T-cell (primary cell): ENCODE measurements at regions of chr4 and their contacts with region 1.

Region 1: DNA sequence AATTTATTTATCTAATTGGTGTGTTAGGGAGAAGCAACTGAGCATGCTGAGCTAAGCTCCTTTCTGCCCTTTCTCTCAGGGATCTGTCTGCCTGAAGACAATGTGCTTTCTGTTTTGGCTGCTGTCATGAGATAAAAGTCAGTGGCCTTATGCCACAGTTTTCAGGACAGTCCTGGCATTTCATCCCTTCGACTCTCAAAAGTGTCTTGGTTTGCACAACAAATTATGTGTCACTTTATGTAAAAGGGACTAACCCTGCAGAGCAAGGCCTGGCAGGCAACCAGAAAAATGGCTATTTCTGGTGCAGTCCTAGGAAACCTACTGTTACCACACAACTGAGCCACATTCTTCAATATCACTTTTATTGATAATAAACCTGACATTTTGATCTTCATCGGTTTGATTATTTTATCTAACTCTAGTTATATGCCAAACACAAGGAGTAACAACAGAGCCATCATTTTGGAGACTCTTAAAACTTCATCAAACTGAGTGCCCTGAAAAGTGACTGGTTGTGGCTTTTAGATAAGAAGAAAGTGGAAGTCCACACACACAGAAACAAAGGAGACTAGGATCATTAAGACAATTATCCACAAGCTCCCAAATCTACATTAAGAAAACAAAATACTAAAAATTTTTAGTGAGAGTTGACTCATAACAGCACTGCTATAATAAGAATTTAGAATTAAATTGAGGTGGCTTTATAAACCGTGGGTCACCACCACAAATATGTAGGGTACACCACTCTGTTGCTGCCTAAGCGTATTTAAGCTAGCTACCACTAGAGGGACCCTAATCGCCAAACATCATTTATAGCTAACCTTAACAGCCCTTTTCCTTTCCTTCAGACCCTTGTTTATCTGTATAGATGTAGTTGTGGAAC is 95.9 kb upstream of the PTPN13 start:
- DNase-seq: peak in 1 of 35 experiments; percentile 52
- ATAC-seq: peak; percentile 37 to 58 (median 50)
- H3K4me3 ChIP-seq: no peak overlapping the region
- H3K4me3 Mint-ChIP-seq: no peak overlapping the region
- H3K27ac ChIP-seq: no peak overlapping the region
- H3K27ac Mint-ChIP-seq: no peak overlapping the region
- H3K4me1 ChIP-seq: no peaks in the 10 kb centered on the region
- H3K4me1 Mint-ChIP-seq: no peaks in the 10 kb centered on the region
- H3K27me3 ChIP-seq: no peaks in the 10 kb centered on the region
- H3K27me3 Mint-ChIP-seq: peaks cover 8 to 12% of the 10 kb centered on the region in 2 donors

Region 2: GRCh38 chr4:86487738-86488348 is 10.4 kb before region 1 on chr4:
- CTCF ChIA-PET with region 1: interaction called, 8 to 17 read pairs
- POLR2A ChIA-PET with region 1: no interaction called
- DNase-seq: no peak
- ATAC-seq: no peak
- H3K4me3 ChIP-seq: no peak overlapping the region
- H3K4me3 Mint-ChIP-seq: no peak overlapping the region
- H3K27ac ChIP-seq: no peak overlapping the region
- H3K27ac Mint-ChIP-seq: no peak overlapping the region
- H3K4me1 ChIP-seq: no peaks in the 10 kb centered on the region
- H3K4me1 Mint-ChIP-seq: peaks cover 0 to 4% (median 3%) of the 10 kb centered on the region in 3 donors
- H3K27me3 ChIP-seq: no peaks in the 10 kb centered on the region
- H3K27me3 Mint-ChIP-seq: no peaks in the 10 kb centered on the region

Region 3: GRCh38 chr4:86895692-86896488 is 397.7 kb after region 1 on chr4:
- CTCF ChIA-PET with region 1: interaction called, 5 to 13 read pairs
- POLR2A ChIA-PET with region 1: no interaction called
- DNase-seq: peak in 4 of 35 experiments; percentile 4 to 66 (median 12)
- ATAC-seq: peak in 2 of 4 experiments; percentile 48 to 60
- H3K4me3 ChIP-seq: no peak overlapping the region
- H3K4me3 Mint-ChIP-seq: no peak overlapping the region
- H3K27ac ChIP-seq: no peak overlapping the region
- H3K27ac Mint-ChIP-seq: no peak overlapping the region
- H3K4me1 ChIP-seq: peaks cover 0 to 10% of the 10 kb centered on the region in 2 experiments
- H3K4me1 Mint-ChIP-seq: peaks cover 6 to 10% (median 7%) of the 10 kb centered on the region in 3 donors
- H3K27me3 ChIP-seq: peaks cover 0 to 18% of the 10 kb centered on the region in 2 experiments
- H3K27me3 Mint-ChIP-seq: peaks cover 15 to 17% of the 10 kb centered on the region in 2 donors

Region 4: GRCh38 chr4:86908251-86908657 is 410.0 kb after region 1 on chr4:
- CTCF ChIA-PET with region 1: interaction called, 4 to 11 read pairs
- POLR2A ChIA-PET with region 1: interaction called in 1 of 2 experiments, 3 read pairs
- DNase-seq: peak in 1 of 35 experiments; percentile 4
- ATAC-seq: no peak
- H3K4me3 ChIP-seq: no peak overlapping the region
- H3K4me3 Mint-ChIP-seq: peak overlapping the region; percentile 53 to 69 (median 61)
- H3K27ac ChIP-seq: no peak overlapping the region
- H3K27ac Mint-ChIP-seq: peak overlapping the region; percentile 13 to 58
- H3K4me1 ChIP-seq: peaks cover 4 to 10% of the 10 kb centered on the region in 2 experiments
- H3K4me1 Mint-ChIP-seq: peaks cover 20 to 33% (median 23%) of the 10 kb centered on the region in 3 donors
- H3K27me3 ChIP-seq: peaks cover 0 to 14% of the 10 kb centered on the region in 2 experiments
- H3K27me3 Mint-ChIP-seq: peaks cover 3 to 10% of the 10 kb centered on the region in 2 donors